ENCODE measurements at regions of chr3 and their contacts with region 1.

Region 1: GRCh38 chr3:197906023-197906849 is 43.8 kb upstream of the RPL35A start:
- DNase-seq: peak; percentile 93
- H3K4me3 Mint-ChIP-seq: peak overlapping the region; percentile 35
- H3K27ac Mint-ChIP-seq: peak overlapping the region; percentile 87
- H3K4me1 Mint-ChIP-seq: peaks cover 27% of the 10 kb centered on the region
- H3K27me3 Mint-ChIP-seq: no peaks in the 10 kb centered on the region

Region 2: GRCh38 chr3:197878427-197878826 is 27.8 kb before region 1 on chr3:
- CTCF ChIA-PET with region 1: interaction called, 4 read pairs
- POLR2A ChIA-PET with region 1: no interaction called
- intact Hi-C with region 1: loop called (anchors 1 kb)
- DNase-seq: peak; percentile 91
- H3K4me3 Mint-ChIP-seq: peak overlapping the region; percentile 16
- H3K27ac Mint-ChIP-seq: peak overlapping the region; percentile 86
- H3K4me1 Mint-ChIP-seq: peaks cover 16% of the 10 kb centered on the region
- H3K27me3 Mint-ChIP-seq: no peaks in the 10 kb centered on the region

Region 3: GRCh38 chr3:197926418-197926817 is 20.2 kb after region 1 on chr3:
- CTCF ChIA-PET with region 1: interaction called, 11 read pairs
- POLR2A ChIA-PET with region 1: no interaction called
- intact Hi-C with region 1: loop called (anchors 1 kb)
- DNase-seq: peak; percentile 30
- H3K4me3 Mint-ChIP-seq: no peak overlapping the region
- H3K27ac Mint-ChIP-seq: no peak overlapping the region
- H3K4me1 Mint-ChIP-seq: peaks cover 5% of the 10 kb centered on the region
- H3K27me3 Mint-ChIP-seq: no peaks in the 10 kb centered on the region

Region 4: GRCh38 chr3:197942956-197943556 is 36.8 kb after region 1 on chr3:
- CTCF ChIA-PET with region 1: interaction called, 44 read pairs
- POLR2A ChIA-PET with region 1: interaction called, 5 read pairs
- intact Hi-C with region 1: loop called (anchors 1 kb)
- DNase-seq: no peak
- H3K4me3 Mint-ChIP-seq: no peak overlapping the region
- H3K27ac Mint-ChIP-seq: no peak overlapping the region
- H3K4me1 Mint-ChIP-seq: no peaks in the 10 kb centered on the region
- H3K27me3 Mint-ChIP-seq: no peaks in the 10 kb centered on the region

Region 5: DNA sequence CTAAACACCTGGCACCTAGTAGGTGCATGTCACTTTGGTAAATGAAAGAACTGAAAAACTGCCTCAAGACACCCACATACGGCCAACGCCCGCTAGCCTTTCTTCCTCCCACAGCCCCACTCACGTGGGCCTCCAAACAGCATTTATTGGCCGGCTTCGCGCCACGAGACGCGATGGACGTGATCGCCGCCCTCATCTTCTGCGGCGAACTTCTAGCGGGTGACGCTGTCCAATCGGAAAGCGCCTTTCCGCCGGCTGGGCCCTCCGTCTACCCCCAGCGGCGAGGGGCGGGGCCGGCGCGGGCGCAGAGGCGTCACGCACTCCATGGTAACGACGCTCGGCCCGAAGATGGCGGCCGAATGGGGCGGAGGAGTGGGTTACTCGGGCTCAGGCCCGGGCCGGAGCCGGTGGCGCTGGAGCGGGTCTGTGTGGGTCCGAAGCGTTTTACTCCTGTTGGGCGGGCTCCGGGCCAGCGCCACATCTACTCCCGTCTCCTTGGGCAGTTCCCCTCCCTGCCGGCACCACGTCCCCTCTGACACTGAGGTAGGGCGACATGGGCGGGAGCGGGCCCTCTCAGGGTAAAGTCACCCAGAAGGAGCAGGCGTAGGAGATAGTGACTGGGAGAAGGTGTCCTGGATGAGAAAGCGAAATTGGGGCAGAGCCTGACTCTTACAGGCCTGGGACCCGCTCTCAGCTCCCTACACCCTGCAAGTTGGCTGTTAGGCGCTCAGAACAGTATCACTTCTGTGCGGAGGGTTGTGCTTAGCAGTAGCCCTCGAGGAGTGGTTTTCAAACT is 53.9 kb after region 1 on chr3 and contains the start of gene LMLN:
- CTCF ChIA-PET with region 1: interaction called, 11 read pairs
- POLR2A ChIA-PET with region 1: no interaction called
- intact Hi-C with region 1: loop called (anchors 1 kb)
- DNase-seq: peak; percentile 97
- H3K4me3 Mint-ChIP-seq: peak within 1 kb of the TSS; percentile 86
- H3K27ac Mint-ChIP-seq: peak within 1 kb of the TSS; percentile 97
- H3K4me1 Mint-ChIP-seq: peaks cover 52% of the 10 kb centered on the region
- H3K27me3 Mint-ChIP-seq: no peaks in the 10 kb centered on the region
- total RNA-seq, gene LMLN: 3.6 to 3.8 TPM

Region 6: DNA sequence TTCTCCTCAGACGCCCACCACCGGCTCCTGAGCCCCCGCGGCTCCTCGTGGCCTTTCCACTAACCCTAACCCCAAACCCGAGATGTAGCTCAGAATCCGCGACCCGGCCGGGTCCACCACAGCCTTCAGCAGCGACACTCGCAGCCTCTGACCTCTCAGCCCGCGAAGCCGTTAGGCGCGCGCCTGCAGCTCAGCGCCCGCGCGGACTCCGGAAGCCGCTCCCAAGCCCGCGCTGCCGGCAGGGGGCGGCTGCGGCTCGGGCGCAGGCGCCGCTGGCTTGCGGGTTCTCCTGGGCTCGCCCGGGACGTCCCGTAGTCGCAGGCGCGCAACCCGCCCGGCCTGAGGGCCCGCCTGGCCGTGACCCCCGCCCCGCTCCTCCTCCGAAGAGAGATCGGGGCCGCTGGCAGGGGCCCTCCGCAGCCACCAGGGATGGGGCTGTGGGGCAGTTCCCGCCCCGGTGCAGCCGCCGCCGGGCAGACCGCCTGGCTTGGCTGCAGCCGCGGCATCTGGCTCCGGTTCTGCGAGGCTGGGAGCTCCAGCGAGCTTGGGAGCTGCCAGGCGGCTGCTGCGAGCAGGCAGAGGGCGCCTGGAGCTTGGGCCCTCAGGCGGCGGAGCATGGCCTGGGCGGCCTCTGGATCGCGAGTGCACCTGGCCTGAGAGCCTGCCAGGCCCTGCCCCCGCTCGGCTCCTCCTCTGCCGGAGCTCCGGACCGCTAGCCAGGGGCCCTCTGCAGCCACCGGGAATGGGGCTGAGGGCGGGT is 174.5 kb after region 1 on chr3:
- CTCF ChIA-PET with region 1: interaction called, 22 read pairs
- POLR2A ChIA-PET with region 1: interaction called, 3 read pairs
- intact Hi-C with region 1: loop called (anchors 1 kb)
- DNase-seq: peak; percentile 85
- H3K4me3 Mint-ChIP-seq: peak overlapping the region; percentile 77
- H3K27ac Mint-ChIP-seq: peak overlapping the region; percentile 86
- H3K4me1 Mint-ChIP-seq: peaks cover 17% of the 10 kb centered on the region
- H3K27me3 Mint-ChIP-seq: peaks cover 38% of the 10 kb centered on the region

Measured in activated CD4-positive, alpha-beta memory T cell treated with anti-CD3 and anti-CD28 coated beads for 36 hours (primary cell).